Activated naive CD8-positive, alpha-beta T cell treated with anti-CD3 and anti-CD28 coated beads, Interleukin-2, amount 10 ng/mL, durations not matched to agents 7 days and 5 days (primary cell): ENCODE measurements at regions of chr19 and their contacts with region 1.

Region 1: GRCh38 chr19:36573020-36573885 is at the start of gene ZNF529:
- DNase-seq: peak; percentile 86
- ATAC-seq: peak; percentile 84
- H3K4me3 Mint-ChIP-seq: peak within 1 kb of the TSS; percentile 91
- H3K27ac Mint-ChIP-seq: peak within 1 kb of the TSS; percentile 97
- H3K4me1 Mint-ChIP-seq: peaks cover 26% of the 10 kb centered on the region
- H3K27me3 Mint-ChIP-seq: no peaks in the 10 kb centered on the region
- total RNA-seq, gene ZNF529: 21.6 to 24.2 TPM

Region 2: GRCh38 chr19:36371886-36372285 is 201.4 kb before region 1 on chr19:
- POLR2A ChIA-PET with region 1: no interaction called
- DNase-seq: no peak
- ATAC-seq: no peak
- H3K4me3 Mint-ChIP-seq: no peak overlapping the region
- H3K27ac Mint-ChIP-seq: no peak overlapping the region
- H3K4me1 Mint-ChIP-seq: no peaks in the 10 kb centered on the region
- H3K27me3 Mint-ChIP-seq: no peaks in the 10 kb centered on the region

Region 3: DNA sequence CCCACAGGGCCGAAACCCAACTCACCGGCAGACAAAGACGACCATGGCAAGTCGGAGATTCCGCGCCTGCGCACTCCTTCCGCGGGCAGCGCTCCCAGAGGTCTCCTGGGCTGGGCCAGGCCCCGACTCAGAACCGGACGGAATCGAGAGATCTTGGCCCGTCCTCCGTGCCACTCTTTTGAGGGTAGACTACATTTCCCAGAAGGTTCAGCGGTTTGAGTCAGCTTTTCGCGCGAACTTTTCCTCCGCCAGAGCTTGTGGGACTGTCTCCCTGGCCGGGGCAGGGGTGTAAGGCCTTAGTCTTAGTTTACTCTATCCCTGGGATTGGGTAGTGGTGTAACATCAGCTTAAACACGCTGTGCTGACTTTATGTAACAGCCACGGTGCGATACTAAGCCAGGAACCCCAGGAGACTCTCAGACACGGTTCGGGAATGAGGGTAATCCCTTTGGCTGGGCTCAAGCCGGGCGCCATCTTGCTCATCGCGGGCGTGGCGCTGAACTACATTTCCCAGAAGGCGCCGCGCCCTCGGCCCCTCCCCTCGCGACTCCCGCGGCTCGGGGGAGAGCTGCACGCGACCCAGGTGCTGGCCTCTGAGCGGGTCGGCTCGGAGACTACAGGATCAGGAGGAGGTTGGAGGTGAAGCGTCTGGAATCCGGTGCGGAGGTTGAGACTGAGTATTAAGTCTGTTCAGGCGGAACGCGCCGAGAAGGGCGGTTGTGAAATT is 44.9 kb before region 1 on chr19 and contains the start of gene ZNF260:
- POLR2A ChIA-PET with region 1: interaction called, 14 read pairs
- DNase-seq: peak; percentile 94
- ATAC-seq: peak; percentile 88
- H3K4me3 Mint-ChIP-seq: peak within 1 kb of the TSS; percentile 99
- H3K27ac Mint-ChIP-seq: peak within 1 kb of the TSS; percentile 99
- H3K4me1 Mint-ChIP-seq: peaks cover 16% of the 10 kb centered on the region
- H3K27me3 Mint-ChIP-seq: no peaks in the 10 kb centered on the region
- total RNA-seq, gene ZNF260: 12.9 to 16.3 TPM

Region 4: DNA sequence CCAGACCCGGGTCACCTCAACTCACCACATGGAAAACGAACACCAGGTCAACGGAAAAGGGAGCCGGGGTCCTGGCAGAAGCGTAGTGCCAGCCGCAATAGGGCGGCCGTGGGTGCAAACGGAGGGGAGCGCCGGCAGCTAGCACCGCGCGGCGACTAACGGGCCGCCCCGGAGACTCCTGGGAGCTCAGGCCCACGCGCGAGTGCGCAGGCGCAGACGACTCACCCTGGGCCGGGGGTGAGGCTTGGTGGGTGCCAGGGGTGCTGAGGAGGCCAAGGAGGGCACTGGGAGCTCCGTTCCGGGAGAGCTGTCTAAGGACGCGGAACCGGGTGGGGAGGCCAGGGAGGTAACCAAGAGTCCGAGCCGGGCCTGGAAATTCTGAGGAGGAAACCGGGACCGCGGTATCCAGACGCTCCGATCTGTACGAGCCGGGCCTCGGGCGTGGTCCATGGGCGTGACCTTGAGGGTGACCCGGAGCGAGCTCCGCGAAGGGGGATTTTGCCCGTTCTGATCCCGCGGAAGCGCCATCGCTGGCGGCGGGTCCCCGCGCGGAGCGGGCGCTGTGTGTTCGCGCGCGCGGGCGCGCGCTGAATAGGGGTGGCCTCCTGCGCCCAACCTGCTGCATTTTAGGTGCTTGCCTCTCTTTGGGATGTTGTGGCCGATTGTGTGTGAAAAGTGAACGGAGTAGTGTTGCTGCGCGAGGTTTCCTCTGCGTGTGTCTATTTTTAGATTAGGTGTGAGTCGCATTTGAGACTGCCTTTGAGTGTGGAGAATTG is 32.0 kb after region 1 on chr19 and contains the start of gene ZNF382:
- POLR2A ChIA-PET with region 1: interaction called, 33 read pairs
- DNase-seq: peak; percentile 92
- ATAC-seq: peak; percentile 84
- H3K4me3 Mint-ChIP-seq: peak within 1 kb of the TSS; percentile 82
- H3K27ac Mint-ChIP-seq: peak within 1 kb of the TSS; percentile 91
- H3K4me1 Mint-ChIP-seq: peaks cover 15% of the 10 kb centered on the region
- H3K27me3 Mint-ChIP-seq: no peaks in the 10 kb centered on the region
- total RNA-seq, gene ZNF382: 15.6 to 16.2 TPM

Region 5: GRCh38 chr19:36665832-36666231 is 92.6 kb after region 1 on chr19:
- POLR2A ChIA-PET with region 1: interaction called, 10 read pairs
- DNase-seq: no peak
- ATAC-seq: no peak
- H3K4me3 Mint-ChIP-seq: peak overlapping the region; percentile 98
- H3K27ac Mint-ChIP-seq: peak overlapping the region; percentile 99
- H3K4me1 Mint-ChIP-seq: peaks cover 14% of the 10 kb centered on the region
- H3K27me3 Mint-ChIP-seq: no peaks in the 10 kb centered on the region

Region 6: DNA sequence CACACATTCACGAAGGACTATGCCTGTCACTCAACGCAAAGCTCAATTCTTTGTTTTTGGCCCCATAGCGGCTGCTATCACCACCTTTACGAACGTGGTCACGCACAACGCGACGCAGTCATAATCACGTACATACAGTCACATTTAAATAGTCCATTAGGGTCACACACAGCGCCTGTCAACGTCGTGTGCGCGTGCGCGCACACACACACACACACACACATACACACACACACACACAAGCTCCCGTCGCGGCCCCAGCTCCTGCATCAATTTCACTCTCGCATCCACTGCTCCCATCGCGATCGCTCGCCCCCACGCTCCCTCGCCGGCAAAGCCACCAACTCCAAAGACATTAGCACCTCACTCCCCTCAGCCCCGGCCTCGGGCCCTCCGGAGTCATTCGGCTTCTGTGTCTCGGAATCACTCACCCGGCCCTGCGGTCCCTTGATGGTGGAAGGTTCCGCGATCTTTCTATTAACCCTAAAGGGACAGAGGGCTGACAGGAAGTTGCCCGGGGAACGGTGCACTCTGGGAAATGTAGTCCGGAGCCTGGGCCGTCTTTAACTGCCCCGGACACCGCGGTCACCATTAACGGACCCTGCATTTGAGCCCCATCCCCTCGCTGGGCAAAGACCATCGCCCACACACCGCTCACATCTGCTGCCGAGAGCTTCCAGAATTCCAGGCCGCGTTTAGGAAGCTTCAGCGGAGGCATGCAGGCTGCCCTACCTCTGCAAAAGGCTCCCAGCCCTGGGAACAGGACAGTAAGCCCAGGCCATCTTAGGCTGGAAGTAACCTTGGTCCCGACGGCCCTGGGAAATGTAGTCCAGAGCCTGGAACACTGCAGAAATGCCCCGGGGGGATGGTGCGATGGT is 264.9 kb after region 1 on chr19 and contains the start of gene ZNF790:
- POLR2A ChIA-PET with region 1: interaction called, 10 read pairs
- DNase-seq: peak; percentile 82
- ATAC-seq: peak; percentile 90
- H3K4me3 Mint-ChIP-seq: no peak within 1 kb of the TSS
- H3K27ac Mint-ChIP-seq: peak within 1 kb of the TSS; percentile 57
- H3K4me1 Mint-ChIP-seq: peaks cover 2% of the 10 kb centered on the region
- H3K27me3 Mint-ChIP-seq: no peaks in the 10 kb centered on the region
- total RNA-seq, gene ZNF790: 13.9 to 16.2 TPM